ENCODE measurements at regions of chr13 and their contacts with region 1.

Region 1: GRCh38 chr13:75549262-75550158 is at the start of gene UCHL3:
- DNase-seq: peak; percentile 97 to 98
- H3K4me3 ChIP-seq: peak within 1 kb of the TSS; percentile 38 to 73 (median 70)
- H3K27ac ChIP-seq: peak within 1 kb of the TSS; percentile 78 to 95 (median 86)
- H3K4me1 ChIP-seq: peaks cover 21 to 25% of the 10 kb centered on the region in 2 donors
- H3K27me3 ChIP-seq: no peaks in the 10 kb centered on the region
- CTCF ChIP-seq: peak; percentile 75 to 96 (median 90)
- POLR2A ChIP-seq: peak in 1 of 2 donors; percentile 91
- total RNA-seq, gene UCHL3: 42.8 to 84.3 (median 58.4) TPM

Region 2: GRCh38 chr13:75357576-75358289 is 191.8 kb before region 1 on chr13:
- intact Hi-C with region 1: loop called (anchors 10 kb)
- DNase-seq: peak; percentile 27 to 32
- H3K4me3 ChIP-seq: no peak overlapping the region
- H3K27ac ChIP-seq: no peak overlapping the region
- H3K4me1 ChIP-seq: no peaks in the 10 kb centered on the region
- H3K27me3 ChIP-seq: no peaks in the 10 kb centered on the region
- CTCF ChIP-seq: peak in 5 of 6 experiments; percentile 27 to 58 (median 47)
- POLR2A ChIP-seq: no peak

Region 3: GRCh38 chr13:75482070-75482819 is 67.3 kb before region 1 on chr13 and contains the start of gene TBC1D4:
- intact Hi-C with region 1: loop called (anchors 10 kb)
- DNase-seq: peak; percentile 97
- H3K4me3 ChIP-seq: peak within 1 kb of the TSS; percentile 71 to 89 (median 76)
- H3K27ac ChIP-seq: peak within 1 kb of the TSS; percentile 80 to 95 (median 87)
- H3K4me1 ChIP-seq: peaks cover 28 to 42% of the 10 kb centered on the region in 2 donors
- H3K27me3 ChIP-seq: no peaks in the 10 kb centered on the region
- CTCF ChIP-seq: peak; percentile 47 to 88 (median 83)
- POLR2A ChIP-seq: peak in 1 of 2 donors; percentile 82
- total RNA-seq, gene TBC1D4: 42.5 to 72.6 (median 70.6) TPM

Region 4: DNA sequence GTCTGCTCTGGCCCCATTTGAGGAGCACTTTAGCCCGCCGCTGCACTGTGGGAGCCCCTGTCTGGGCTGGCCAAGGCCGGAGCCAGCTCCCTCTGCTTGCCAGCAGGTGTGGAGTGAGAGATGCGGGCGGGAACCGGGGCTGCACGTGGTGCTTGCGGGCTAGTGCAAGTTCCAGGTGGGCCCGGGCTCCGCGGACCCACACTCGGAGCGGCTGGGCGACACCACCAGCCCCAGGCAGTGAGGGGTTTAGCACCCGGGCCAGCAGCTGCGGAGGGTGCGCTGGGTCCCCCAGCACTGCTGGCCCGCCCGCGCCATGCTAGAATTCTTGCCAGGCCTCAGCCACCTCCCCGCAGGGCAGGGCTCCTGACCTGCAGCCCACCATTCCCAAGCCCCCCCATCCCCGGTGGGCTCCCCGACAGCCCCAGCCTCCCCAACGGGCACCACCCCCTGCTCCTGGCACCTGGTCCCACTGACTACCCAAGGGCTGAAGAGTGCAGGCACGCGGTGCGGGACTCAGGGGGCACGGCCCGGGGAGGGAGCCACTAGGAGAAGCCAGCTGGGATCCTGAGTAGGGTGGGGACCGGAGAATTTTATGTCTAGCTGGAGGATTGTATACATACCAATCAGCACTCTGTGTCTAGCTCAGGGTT is 30.9 kb before region 1 on chr13:
- intact Hi-C with region 1: no loop called
- DNase-seq: no peak
- H3K4me3 ChIP-seq: no peak overlapping the region
- H3K27ac ChIP-seq: no peak overlapping the region
- H3K4me1 ChIP-seq: no peaks in the 10 kb centered on the region
- H3K27me3 ChIP-seq: no peaks in the 10 kb centered on the region
- CTCF ChIP-seq: no peak
- POLR2A ChIP-seq: no peak

Region 5: GRCh38 chr13:76004416-76004815 is 454.9 kb after region 1 on chr13:
- intact Hi-C with region 1: no loop called
- DNase-seq: no peak
- H3K4me3 ChIP-seq: no peak overlapping the region
- H3K27ac ChIP-seq: no peak overlapping the region
- H3K4me1 ChIP-seq: no peaks in the 10 kb centered on the region
- H3K27me3 ChIP-seq: no peaks in the 10 kb centered on the region
- CTCF ChIP-seq: no peak
- POLR2A ChIP-seq: no peak

Measured in thyroid gland (tissue), 4 donors.